Gastrocnemius medialis (tissue), 4 donors: ENCODE measurements at regions of chr16 and their contacts with region 1.

Region 1: GRCh38 chr16:89217388-89218191 is at the start of gene ZNF778:
- DNase-seq: peak; percentile 73 to 79
- ATAC-seq: peak; percentile 82 to 87
- H3K4me3 ChIP-seq: peak within 1 kb of the TSS; percentile 84 to 98 (median 92)
- H3K27ac ChIP-seq: peak within 1 kb of the TSS; percentile 95 to 100 (median 98)
- H3K4me1 ChIP-seq: peaks cover 25% of the 10 kb centered on the region in 2 donors
- H3K27me3 ChIP-seq: no peaks in the 10 kb centered on the region
- CTCF ChIP-seq: peak in 1 of 5 experiments; percentile 24
- POLR2A ChIP-seq: peak; percentile 94 to 97
- total RNA-seq, gene ZNF778: 10.7 to 21.3 (median 17.9) TPM

Region 2: GRCh38 chr16:88737298-88738150 is 480.1 kb before region 1 on chr16:
- in situ Hi-C with region 1: loop called in 2 of 4 experiments (anchors 25 kb)
- intact Hi-C with region 1: loop called (anchors 2 kb)
- DNase-seq: peak; percentile 29 to 67
- ATAC-seq: peak; percentile 61 to 71
- H3K4me3 ChIP-seq: no peak overlapping the region
- H3K27ac ChIP-seq: no peak overlapping the region
- H3K4me1 ChIP-seq: peaks cover 0 to 7% of the 10 kb centered on the region in 2 donors
- H3K27me3 ChIP-seq: no peaks in the 10 kb centered on the region
- CTCF ChIP-seq: peak; percentile 91 to 98 (median 97)
- POLR2A ChIP-seq: no peak

Region 3: DNA sequence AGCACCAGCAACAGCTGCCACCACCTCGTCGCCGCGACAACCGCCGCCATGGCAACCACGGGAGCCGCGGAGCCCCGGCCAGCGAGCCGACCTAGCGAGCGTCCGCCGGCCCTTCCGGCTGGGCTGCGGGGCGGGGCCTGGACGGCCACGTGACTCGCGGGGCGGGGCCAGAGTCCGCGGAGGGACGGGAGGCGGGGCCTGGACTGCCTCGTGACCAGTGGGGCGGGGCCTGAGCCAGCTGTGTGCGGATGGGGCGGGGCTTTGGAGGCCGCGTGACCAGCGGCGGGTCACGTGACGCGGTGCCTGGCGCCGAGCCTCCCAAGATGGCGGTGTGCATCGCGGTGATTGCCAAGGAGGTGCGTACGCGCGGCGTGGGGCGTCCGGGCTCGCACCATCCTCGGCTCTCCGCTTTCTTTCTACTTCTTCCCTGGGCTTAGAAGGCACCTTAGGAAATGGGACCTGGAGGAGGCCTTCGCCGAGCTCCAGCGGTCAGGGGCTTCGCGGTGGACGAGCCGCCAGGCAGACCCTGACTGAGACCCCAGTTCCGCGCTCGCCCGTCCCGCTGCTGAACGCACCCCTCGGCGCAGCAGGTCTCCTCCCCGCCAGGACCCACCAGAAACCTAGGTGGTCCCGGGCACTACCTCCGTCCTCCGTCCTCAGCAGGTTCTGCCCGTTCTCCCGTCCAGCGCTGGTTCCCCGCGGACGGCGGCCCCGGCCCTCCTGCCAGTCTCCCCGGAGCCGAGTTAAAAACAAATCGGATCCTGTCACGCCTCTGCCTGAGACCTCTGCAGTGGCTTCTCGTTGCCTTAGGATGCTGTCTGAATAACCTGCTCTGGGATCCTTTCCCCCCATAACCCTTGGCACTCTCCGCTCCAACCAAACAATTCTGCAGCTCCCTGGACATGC is 360.5 kb before region 1 on chr16 and contains the starts of genes GALNS and TRAPPC2L:
- in situ Hi-C with region 1: loop called in 1 of 4 experiments (anchors 25 kb)
- intact Hi-C with region 1: loop called (anchors 1 kb)
- DNase-seq: peak; percentile 97
- ATAC-seq: peak; percentile 92 to 95
- H3K4me3 ChIP-seq: peak within 1 kb of the TSS; percentile 91 to 99 (median 94)
- H3K27ac ChIP-seq: peak within 1 kb of the TSS; percentile 89 to 92 (median 90)
- H3K4me1 ChIP-seq: peaks cover 16 to 17% of the 10 kb centered on the region in 2 donors
- H3K27me3 ChIP-seq: no peaks in the 10 kb centered on the region
- CTCF ChIP-seq: peak in 2 of 5 experiments; percentile 44 to 54
- POLR2A ChIP-seq: peak; percentile 79 to 81
- total RNA-seq, gene GALNS: 8.8 to 14.7 (median 10.0) TPM
- total RNA-seq, gene TRAPPC2L: 17.8 to 27.9 (median 20.5) TPM

Region 4: GRCh38 chr16:88941913-88942909 is 275.4 kb before region 1 on chr16:
- in situ Hi-C with region 1: no loop called
- intact Hi-C with region 1: loop called (anchors 1 kb)
- DNase-seq: no peak
- ATAC-seq: peak; percentile 29 to 33
- H3K4me3 ChIP-seq: peak overlapping the region; percentile 36 to 63 (median 40)
- H3K27ac ChIP-seq: no peak overlapping the region
- H3K4me1 ChIP-seq: peaks cover 18% of the 10 kb centered on the region in 2 donors
- H3K27me3 ChIP-seq: peaks cover 10 to 29% (median 25%) of the 10 kb centered on the region in 3 donors
- CTCF ChIP-seq: peak in 4 of 5 experiments; percentile 58 to 86 (median 66)
- POLR2A ChIP-seq: no peak

Region 5: GRCh38 chr16:89093602-89094251 is 123.9 kb before region 1 on chr16 and contains the start of gene ACSF3:
- in situ Hi-C with region 1: no loop called
- intact Hi-C with region 1: loop called (anchors 2 kb)
- DNase-seq: peak; percentile 25 to 55
- ATAC-seq: peak; percentile 89
- H3K4me3 ChIP-seq: peak within 1 kb of the TSS; percentile 71 to 94 (median 84)
- H3K27ac ChIP-seq: peak within 1 kb of the TSS; percentile 58 to 75 (median 64)
- H3K4me1 ChIP-seq: peaks cover 11 to 21% of the 10 kb centered on the region in 2 donors
- H3K27me3 ChIP-seq: peaks cover 8 to 12% (median 9%) of the 10 kb centered on the region in 3 donors
- CTCF ChIP-seq: peak in 1 of 5 experiments; percentile 27
- POLR2A ChIP-seq: peak; percentile 11 to 46
- total RNA-seq, gene ACSF3: 17.8 to 20.7 (median 19.4) TPM